ENCODE measurements at regions of chr18 and their contacts with region 1.

Region 1: GRCh38 chr18:76492669-76493212 is 2.3 kb downstream of the ZNF516 start:
- DNase-seq: peak; percentile 100
- ATAC-seq: peak; percentile 89 to 97 (median 94)
- H3K4me3 ChIP-seq: peak overlapping the region; percentile 54 to 94 (median 78)
- H3K27ac ChIP-seq: peak overlapping the region; percentile 9 to 89 (median 82)
- H3K4me1 ChIP-seq: peaks cover 4 to 52% (median 35%) of the 10 kb centered on the region in 9 donors
- H3K27me3 ChIP-seq: no peaks in the 10 kb centered on the region
- CTCF ChIP-seq: no peak

Region 2: GRCh38 chr18:76374330-76375281 is 118.1 kb before region 1 on chr18:
- intact Hi-C with region 1: no loop called
- DNase-seq: no peak
- ATAC-seq: no peak
- H3K4me3 ChIP-seq: no peak overlapping the region
- H3K27ac ChIP-seq: no peak overlapping the region
- H3K4me1 ChIP-seq: peaks cover 0 to 27% (median 4%) of the 10 kb centered on the region in 9 donors
- H3K27me3 ChIP-seq: no peaks in the 10 kb centered on the region
- CTCF ChIP-seq: no peak

Region 3: GRCh38 chr18:76405681-76406356 is 86.9 kb before region 1 on chr18:
- intact Hi-C with region 1: loop called in 3 of 10 experiments (anchors 5 to 10 kb)
- DNase-seq: peak in 1 of 2 donors; percentile 57
- ATAC-seq: peak in 4 of 8 donors; percentile 29 to 54 (median 38)
- H3K4me3 ChIP-seq: no peak overlapping the region
- H3K27ac ChIP-seq: no peak overlapping the region
- H3K4me1 ChIP-seq: peaks cover 0 to 32% (median 9%) of the 10 kb centered on the region in 9 donors
- H3K27me3 ChIP-seq: no peaks in the 10 kb centered on the region
- CTCF ChIP-seq: peak; percentile 5 to 62 (median 43)

Region 4: DNA sequence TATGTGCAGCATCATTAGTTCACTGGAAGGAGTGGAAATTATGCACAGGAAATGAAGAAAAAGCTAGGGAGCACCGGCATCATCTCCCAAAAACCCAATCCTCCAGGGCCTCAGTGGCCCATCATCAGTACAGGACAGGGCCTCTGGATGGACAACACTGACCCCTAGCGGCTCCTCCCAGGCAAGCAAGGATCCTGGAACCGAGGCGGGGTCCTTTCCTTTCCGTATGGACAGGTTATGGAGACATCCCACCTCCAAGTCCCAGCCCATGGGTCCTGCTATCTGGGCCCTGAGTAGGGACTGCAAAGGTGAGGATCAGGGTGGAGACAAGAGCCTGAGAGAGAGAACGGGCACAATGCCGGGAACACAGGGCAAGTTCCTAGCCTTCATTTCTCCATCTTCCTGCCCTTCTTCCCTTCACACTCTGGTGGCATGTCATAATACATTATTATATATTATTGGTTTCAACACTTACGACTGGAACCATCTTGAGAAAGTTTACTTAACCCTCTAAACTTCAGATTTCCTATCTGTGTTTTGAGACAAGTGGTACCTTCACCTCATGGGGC is 65.9 kb before region 1 on chr18:
- intact Hi-C with region 1: loop called in 1 of 10 experiments (anchors 5 kb)
- DNase-seq: no peak
- ATAC-seq: peak in 6 of 8 donors; percentile 28 to 55 (median 50)
- H3K4me3 ChIP-seq: no peak overlapping the region
- H3K27ac ChIP-seq: no peak overlapping the region
- H3K4me1 ChIP-seq: peaks cover 0 to 32% (median 24%) of the 10 kb centered on the region in 9 donors
- H3K27me3 ChIP-seq: no peaks in the 10 kb centered on the region
- CTCF ChIP-seq: peak; percentile 39 to 67 (median 61)

Region 5: GRCh38 chr18:76518860-76519538 is 26.3 kb after region 1 on chr18:
- intact Hi-C with region 1: loop called in 1 of 10 experiments (anchors 1 kb)
- DNase-seq: no peak
- ATAC-seq: peak in 7 of 8 donors; percentile 10 to 81 (median 42)
- H3K4me3 ChIP-seq: peak overlapping the region in 8 of 10 donors; percentile 4 to 51 (median 40)
- H3K27ac ChIP-seq: peak overlapping the region in 6 of 10 donors; percentile 16 to 65 (median 38)
- H3K4me1 ChIP-seq: peaks cover 0 to 11% (median 0%) of the 10 kb centered on the region in 9 donors
- H3K27me3 ChIP-seq: peaks cover 0 to 51% (median 22%) of the 10 kb centered on the region in 7 donors
- CTCF ChIP-seq: no peak

Region 6: GRCh38 chr18:76610933-76611749 is 118.4 kb after region 1 on chr18:
- intact Hi-C with region 1: no loop called
- DNase-seq: no peak
- ATAC-seq: no peak
- H3K4me3 ChIP-seq: peak overlapping the region in 3 of 10 donors; percentile 1 to 5 (median 3)
- H3K27ac ChIP-seq: no peak overlapping the region
- H3K4me1 ChIP-seq: no peaks in the 10 kb centered on the region
- H3K27me3 ChIP-seq: peaks cover 0 to 23% (median 3%) of the 10 kb centered on the region in 7 donors
- CTCF ChIP-seq: no peak

Region 7: DNA sequence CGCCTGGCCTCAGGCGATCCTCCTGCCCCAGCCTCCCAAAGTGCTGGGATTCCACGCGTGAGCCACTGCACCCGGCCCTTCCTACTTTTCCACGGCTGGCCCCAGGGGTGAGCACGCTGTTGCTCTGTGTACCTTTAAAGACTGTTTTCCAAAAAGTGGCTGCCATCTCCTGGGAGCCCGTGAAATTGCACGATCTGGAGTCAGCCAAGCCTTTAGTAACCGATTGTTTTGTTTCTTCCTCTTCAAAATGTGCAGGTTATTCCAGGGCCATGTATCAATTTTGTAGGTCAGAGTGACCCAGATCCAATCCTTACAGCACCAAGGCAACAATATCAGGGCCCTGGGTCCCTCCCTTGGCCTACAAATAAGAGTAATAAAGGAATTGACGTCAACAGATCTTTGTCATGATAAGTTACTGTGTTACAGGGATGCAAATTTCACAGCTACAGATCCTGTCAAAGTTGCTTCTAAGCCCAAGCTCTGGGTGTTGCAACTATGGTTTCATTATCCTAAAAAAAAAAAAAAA is 194.1 kb after region 1 on chr18:
- intact Hi-C with region 1: loop called in 1 of 10 experiments (anchors 5 kb)
- DNase-seq: peak; percentile 36 to 49
- ATAC-seq: peak; percentile 85 to 93 (median 88)
- H3K4me3 ChIP-seq: no peak overlapping the region
- H3K27ac ChIP-seq: peak overlapping the region in 1 of 10 donors; percentile 28
- H3K4me1 ChIP-seq: peaks cover 3 to 12% (median 9%) of the 10 kb centered on the region in 9 donors
- H3K27me3 ChIP-seq: peaks cover 0 to 58% (median 30%) of the 10 kb centered on the region in 7 donors
- CTCF ChIP-seq: peak; percentile 29 to 78 (median 65)

Measured in heart right ventricle (tissue), 16 donors.